HCT116 (cell line): ENCODE measurements at regions of chr6 and their contacts with region 1.

Region 1: GRCh38 chr6:25490018-25490801 is 161.8 kb upstream of the SCGN start:
- DNase-seq: peak; percentile 69
- ATAC-seq: peak; percentile 98
- H3K4me3 ChIP-seq: no peak overlapping the region
- H3K27ac ChIP-seq: no peak overlapping the region
- H3K4me1 ChIP-seq: peaks cover 0 to 16% of the 10 kb centered on the region in 2 experiments; a peak in 1 of 4 replicates
- H3K27me3 ChIP-seq: no peaks in the 10 kb centered on the region
- CTCF ChIP-seq: peak; percentile 83 to 84 (median 84)
- POLR2A ChIP-seq: no peak
- RAD21 ChIP-seq: peak; percentile 88

Region 2: DNA sequence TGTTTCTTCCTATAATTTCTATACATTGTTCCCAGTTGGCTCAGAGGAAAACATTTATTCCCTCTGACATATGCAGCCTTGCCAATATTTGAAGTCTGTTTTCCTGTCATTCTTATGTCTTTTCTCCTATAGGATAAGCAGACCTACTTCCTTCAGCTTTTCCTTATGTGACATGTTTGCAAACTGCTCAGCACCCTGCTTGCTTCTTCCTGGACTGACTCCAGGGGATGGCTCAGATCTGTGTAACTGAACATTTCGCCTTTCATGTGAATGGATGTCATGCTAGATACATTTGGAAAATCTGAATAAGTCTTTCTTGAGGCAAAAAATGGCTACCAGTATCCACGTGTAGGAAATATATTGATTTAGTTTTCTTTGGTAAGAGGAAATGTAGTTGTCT is 97.8 kb before region 1 on chr6:
- CTCF ChIA-PET with region 1: no interaction called
- POLR2A ChIA-PET with region 1: no interaction called
- RAD21 ChIA-PET with region 1: no interaction called
- intact Hi-C with region 1: no loop called
- DNase-seq: no peak
- ATAC-seq: no peak
- H3K4me3 ChIP-seq: no peak overlapping the region
- H3K27ac ChIP-seq: no peak overlapping the region
- H3K4me1 ChIP-seq: 0 out of 4 replicates have a peak, but pooled peaks cover 0 to 3% of the 10 kb centered on the region in 2 experiments
- H3K27me3 ChIP-seq: no peaks in the 10 kb centered on the region
- CTCF ChIP-seq: no peak
- POLR2A ChIP-seq: no peak
- RAD21 ChIP-seq: no peak

Region 3: DNA sequence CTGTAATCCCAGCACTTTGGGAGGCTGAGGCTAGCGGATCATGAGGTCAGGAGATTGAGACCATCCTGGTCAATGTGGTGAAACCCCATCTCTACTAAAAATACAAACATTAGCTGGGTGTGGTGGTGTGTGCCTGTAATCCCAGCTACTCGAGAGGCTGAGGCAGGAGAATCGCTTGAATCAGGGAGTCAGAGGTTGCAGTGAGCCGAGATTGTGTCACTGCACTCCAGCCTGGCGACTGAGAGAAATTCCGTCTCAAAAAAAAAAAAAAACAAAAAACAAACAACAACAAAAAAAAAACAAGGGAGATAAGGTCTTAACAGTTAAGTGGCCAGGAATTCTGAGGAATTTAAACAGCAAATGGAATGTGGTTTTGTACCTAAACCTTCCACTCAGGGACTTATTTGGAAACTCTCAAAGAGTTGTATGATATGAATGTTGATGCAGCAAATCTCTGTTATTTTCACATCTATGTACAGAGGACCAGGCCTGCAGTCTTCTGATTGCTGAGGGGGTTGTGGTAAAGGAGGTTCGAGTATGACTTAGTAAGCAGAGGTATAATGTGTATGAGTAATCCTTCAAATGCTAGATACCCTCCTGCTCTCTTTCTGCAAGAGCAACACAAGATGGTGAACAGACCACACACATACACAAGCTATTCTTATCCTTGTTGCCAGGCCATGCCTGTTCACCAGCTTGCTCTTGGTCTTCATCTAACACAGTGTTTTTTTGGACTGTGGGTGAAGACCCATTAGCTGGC is 13.2 kb before region 1 on chr6:
- CTCF ChIA-PET with region 1: interaction called, 14 read pairs
- POLR2A ChIA-PET with region 1: no interaction called
- RAD21 ChIA-PET with region 1: no interaction called
- intact Hi-C with region 1: no loop called
- DNase-seq: no peak
- ATAC-seq: no peak
- H3K4me3 ChIP-seq: no peak overlapping the region
- H3K27ac ChIP-seq: no peak overlapping the region
- H3K4me1 ChIP-seq: peaks cover 0 to 17% of the 10 kb centered on the region in 2 experiments; a peak in 2 of 4 replicates
- H3K27me3 ChIP-seq: no peaks in the 10 kb centered on the region
- CTCF ChIP-seq: no peak
- POLR2A ChIP-seq: no peak
- RAD21 ChIP-seq: no peak

Region 4: GRCh38 chr6:25504661-25505060 is 14.5 kb after region 1 on chr6:
- CTCF ChIA-PET with region 1: interaction called, 29 read pairs
- POLR2A ChIA-PET with region 1: no interaction called
- RAD21 ChIA-PET with region 1: no interaction called
- intact Hi-C with region 1: no loop called
- DNase-seq: peak; percentile 82
- ATAC-seq: peak; percentile 89
- H3K4me3 ChIP-seq: no peak overlapping the region
- H3K27ac ChIP-seq: no peak overlapping the region; the same call in 1 of the 2 replicates
- H3K4me1 ChIP-seq: peaks cover 4 to 31% of the 10 kb centered on the region in 2 experiments; a peak in 3 of 4 replicates
- H3K27me3 ChIP-seq: no peaks in the 10 kb centered on the region
- CTCF ChIP-seq: no peak
- POLR2A ChIP-seq: no peak
- RAD21 ChIP-seq: no peak

Region 5: GRCh38 chr6:25637960-25638434 is 147.8 kb after region 1 on chr6:
- CTCF ChIA-PET with region 1: no interaction called
- POLR2A ChIA-PET with region 1: no interaction called
- RAD21 ChIA-PET with region 1: no interaction called
- intact Hi-C with region 1: no loop called
- DNase-seq: no peak
- ATAC-seq: peak; percentile 57
- H3K4me3 ChIP-seq: no peak overlapping the region
- H3K27ac ChIP-seq: no peak overlapping the region
- H3K4me1 ChIP-seq: no peaks in the 10 kb centered on the region
- H3K27me3 ChIP-seq: peaks cover 20% of the 10 kb centered on the region; the same call in 1 of the 2 replicates
- CTCF ChIP-seq: peak; percentile 4 to 27 (median 23); a peak in 3 of 6 replicates
- POLR2A ChIP-seq: no peak
- RAD21 ChIP-seq: 0 out of 2 replicates have a peak, but pooled peaks have one; percentile 37